Heart left ventricle (tissue), 16 donors: ENCODE measurements at regions of chr10 and their contacts with region 1.

Region 1: DNA sequence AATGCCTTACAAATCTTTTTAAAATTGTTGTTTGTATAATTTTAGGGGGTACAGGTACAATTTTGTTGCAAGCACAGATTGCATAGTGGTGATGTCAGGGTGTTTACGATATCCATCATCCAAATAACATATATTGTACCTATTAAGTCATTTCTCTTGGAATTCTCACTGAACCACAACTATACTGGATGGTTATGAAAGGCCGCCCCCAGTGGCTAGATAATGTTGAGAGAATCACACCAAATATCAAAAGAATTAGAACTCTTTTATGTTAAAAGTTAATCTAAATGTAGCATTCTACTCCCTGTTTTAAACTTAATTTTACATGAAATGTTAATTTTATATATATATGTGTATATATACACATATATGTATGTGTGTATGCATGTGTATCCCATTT is 155.9 kb upstream of the ADARB2 start:
- DNase-seq: no peak
- ATAC-seq: no peak
- H3K4me3 ChIP-seq: no peak overlapping the region
- H3K27ac ChIP-seq: no peak overlapping the region
- H3K4me1 ChIP-seq: no peaks in the 10 kb centered on the region
- H3K27me3 ChIP-seq: no peaks in the 10 kb centered on the region
- CTCF ChIP-seq: no peak
- POLR2A ChIP-seq: no peak

Region 2: GRCh38 chr10:1903982-1904381 is 10.7 kb after region 1 on chr10:
- intact Hi-C with region 1: loop called in 1 of 10 experiments (anchors 1 kb)
- DNase-seq: no peak
- ATAC-seq: no peak
- H3K4me3 ChIP-seq: no peak overlapping the region
- H3K27ac ChIP-seq: no peak overlapping the region
- H3K4me1 ChIP-seq: no peaks in the 10 kb centered on the region
- H3K27me3 ChIP-seq: no peaks in the 10 kb centered on the region
- CTCF ChIP-seq: no peak
- POLR2A ChIP-seq: no peak

Region 3: GRCh38 chr10:1954322-1954721 is 61.1 kb after region 1 on chr10:
- intact Hi-C with region 1: loop called in 1 of 10 experiments (anchors 2 kb)
- DNase-seq: no peak
- ATAC-seq: no peak
- H3K4me3 ChIP-seq: no peak overlapping the region
- H3K27ac ChIP-seq: no peak overlapping the region
- H3K4me1 ChIP-seq: no peaks in the 10 kb centered on the region
- H3K27me3 ChIP-seq: no peaks in the 10 kb centered on the region
- CTCF ChIP-seq: no peak
- POLR2A ChIP-seq: no peak